Ascending aorta (tissue), 2 donors: ENCODE measurements at regions of chr2 and their contacts with region 1.

Region 1: DNA sequence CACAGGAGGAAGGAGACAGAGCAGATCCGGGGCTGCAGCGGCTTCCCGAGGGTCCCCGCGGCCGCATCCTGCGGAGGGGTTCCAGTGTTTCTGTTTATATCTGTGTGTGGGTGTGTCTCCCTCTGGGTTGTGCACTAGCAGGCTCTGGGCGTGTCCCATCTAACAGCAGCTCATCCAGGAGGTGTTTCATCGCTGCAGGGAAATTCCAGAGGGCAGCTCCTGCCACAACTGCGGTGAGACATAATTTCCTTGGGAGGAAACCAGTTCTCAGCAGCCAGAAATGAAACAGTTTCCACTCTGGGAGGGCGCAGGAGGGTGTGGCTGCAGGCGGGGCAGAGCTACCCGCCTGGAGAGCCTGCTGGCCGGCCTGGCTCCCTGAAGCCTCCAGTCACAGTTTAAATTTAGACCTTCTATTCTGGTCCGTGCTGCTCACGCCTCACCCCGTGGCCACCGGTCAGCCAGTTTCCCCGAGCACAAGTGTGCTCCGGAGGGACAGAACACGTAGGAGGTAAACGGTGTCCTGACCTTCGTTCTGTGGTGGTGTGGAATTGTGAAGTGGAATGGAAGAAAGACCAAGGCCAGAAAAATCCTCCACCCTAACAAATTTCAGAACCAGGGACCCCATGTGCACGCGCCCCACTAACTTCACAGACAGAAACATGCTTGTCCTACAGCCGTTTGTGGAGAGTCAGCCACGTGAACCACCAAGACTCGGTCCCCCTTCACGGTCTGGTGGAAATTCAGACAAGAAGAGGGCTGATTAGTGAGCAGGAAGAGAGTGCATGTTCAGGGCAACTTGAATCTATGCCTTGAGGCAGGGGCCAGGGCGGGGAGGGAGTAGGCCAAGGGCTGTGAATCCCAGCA is 50.2 kb downstream of the TEX44 start:
- DNase-seq: peak; percentile 86 to 98
- H3K4me3 ChIP-seq: peak overlapping the region; percentile 35 to 49
- H3K27ac ChIP-seq: peak overlapping the region; percentile 97 to 99
- H3K4me1 ChIP-seq: peaks cover 21 to 41% of the 10 kb centered on the region in 2 donors
- H3K27me3 ChIP-seq: no peaks in the 10 kb centered on the region
- CTCF ChIP-seq: no peak

Region 2: DNA sequence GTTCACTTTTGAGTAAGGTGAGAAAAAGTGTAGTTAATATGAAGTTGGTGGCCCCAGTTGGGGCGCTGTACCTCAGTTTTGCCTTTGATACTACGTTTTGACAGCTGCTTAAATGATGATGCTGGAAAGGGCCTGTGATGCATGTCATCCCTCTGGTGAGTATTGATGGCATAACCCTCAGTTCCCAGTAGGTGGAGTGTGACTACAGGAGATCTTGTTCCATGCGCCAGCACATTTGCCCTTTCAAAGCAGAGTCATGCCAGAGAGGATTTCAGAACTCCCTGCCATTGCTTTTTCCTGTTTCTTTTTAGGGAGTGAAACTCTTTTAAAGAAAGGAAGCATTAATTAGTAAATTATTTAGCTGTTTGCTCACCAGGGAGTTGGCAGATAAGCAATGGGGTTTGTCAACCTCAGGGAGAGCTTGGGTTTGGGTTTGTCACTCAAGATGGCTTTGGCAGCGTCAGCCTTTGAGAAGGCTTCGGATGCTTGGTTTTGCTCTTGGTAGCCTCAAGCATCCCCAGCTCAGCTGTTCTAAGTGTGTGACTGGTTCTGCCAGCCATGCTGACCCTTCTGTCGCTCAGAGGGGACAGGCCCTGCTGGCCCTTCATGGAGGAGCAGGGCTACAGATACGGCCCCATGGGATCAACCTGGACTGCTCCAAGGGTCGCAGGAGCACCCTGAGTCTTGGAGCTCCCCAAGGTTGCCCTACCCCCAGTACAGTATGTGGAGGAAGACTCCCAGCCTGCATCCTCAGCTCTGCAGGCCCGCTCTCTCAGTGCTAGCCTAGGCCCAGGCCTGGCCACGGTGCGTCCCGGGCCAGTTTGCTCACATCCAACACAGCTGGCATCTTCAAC is 415.3 kb before region 1 on chr2:
- intact Hi-C with region 1: no loop called
- DNase-seq: peak in 1 of 2 donors; percentile 79
- H3K4me3 ChIP-seq: no peak overlapping the region
- H3K27ac ChIP-seq: peak overlapping the region; percentile 8 to 15
- H3K4me1 ChIP-seq: peaks cover 0 to 12% of the 10 kb centered on the region in 2 donors
- H3K27me3 ChIP-seq: no peaks in the 10 kb centered on the region
- CTCF ChIP-seq: peak; percentile 69 to 82 (median 75)

Region 3: DNA sequence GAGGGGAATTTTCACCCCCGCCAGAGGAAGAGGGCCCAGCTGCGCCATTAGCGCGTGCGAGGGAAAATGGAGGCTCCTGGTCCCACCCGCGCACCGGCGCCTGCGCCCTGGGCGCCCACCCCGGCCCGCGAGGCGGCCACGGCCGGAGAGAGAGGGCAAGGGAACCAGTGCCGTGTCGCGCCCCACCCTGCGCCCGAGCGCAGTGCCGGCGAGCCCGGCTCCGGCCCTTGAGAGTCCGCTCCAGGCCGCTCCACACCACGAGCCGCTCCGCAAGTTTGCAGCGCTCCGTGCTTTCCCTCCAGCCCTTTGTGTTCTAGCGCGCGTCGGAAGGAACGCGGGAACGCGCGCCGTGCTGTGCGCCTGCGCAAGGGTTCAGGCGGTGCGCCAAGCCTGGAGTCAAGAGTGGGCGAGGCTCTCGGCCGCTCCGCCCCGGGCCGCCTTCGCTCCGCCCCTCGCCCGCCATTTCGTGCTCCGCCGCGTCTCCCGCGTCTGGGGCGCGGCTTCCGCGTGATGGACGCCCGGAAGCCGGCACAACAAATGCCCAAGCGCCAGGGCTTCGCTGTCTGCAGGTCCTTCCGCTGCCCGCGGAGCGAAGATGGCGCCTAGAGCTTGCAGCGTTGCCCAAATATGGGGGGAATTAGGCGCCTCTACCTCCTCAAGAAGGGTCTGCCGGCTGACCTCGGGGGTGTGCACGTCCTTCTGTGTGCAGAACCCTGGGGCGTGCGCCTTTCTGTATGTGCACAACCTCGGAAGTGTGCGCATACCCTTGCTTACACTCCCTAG is 19.4 kb after region 1 on chr2:
- intact Hi-C with region 1: loop called (anchors 1 kb)
- DNase-seq: peak; percentile 76 to 96
- H3K4me3 ChIP-seq: peak overlapping the region; percentile 53 to 63
- H3K27ac ChIP-seq: peak overlapping the region; percentile 99 to 100
- H3K4me1 ChIP-seq: peaks cover 3 to 18% of the 10 kb centered on the region in 2 donors
- H3K27me3 ChIP-seq: no peaks in the 10 kb centered on the region
- CTCF ChIP-seq: peak in 1 of 3 experiments; percentile 10

Region 4: GRCh38 chr2:231713730-231714430 is 71.0 kb after region 1 on chr2:
- intact Hi-C with region 1: no loop called
- DNase-seq: peak; percentile 58 to 95
- H3K4me3 ChIP-seq: no peak overlapping the region
- H3K27ac ChIP-seq: peak overlapping the region; percentile 30 to 83
- H3K4me1 ChIP-seq: peaks cover 23 to 35% of the 10 kb centered on the region in 2 donors
- H3K27me3 ChIP-seq: no peaks in the 10 kb centered on the region
- CTCF ChIP-seq: peak; percentile 88 to 92 (median 90)